HEK293 (cell line): ENCODE measurements at regions of chr4 and their contacts with region 1.

Region 1: GRCh38 chr4:138870737-138871554 is 144.6 kb upstream of the NOCT start:
- H3K4me3 ChIP-seq: no peak overlapping the region
- H3K27ac ChIP-seq: no peak overlapping the region
- H3K4me1 ChIP-seq: no peaks in the 10 kb centered on the region
- CTCF ChIP-seq: no peak

Region 2: GRCh38 chr4:137819964-137820383 is 1051.0 kb before region 1 on chr4:
- CTCF ChIA-PET with region 1: interaction called, 12 read pairs
- POLR2A ChIA-PET with region 1: no interaction called
- H3K4me3 ChIP-seq: no peak overlapping the region
- H3K27ac ChIP-seq: no peak overlapping the region
- H3K4me1 ChIP-seq: no peaks in the 10 kb centered on the region
- CTCF ChIP-seq: 0 out of 2 replicates have a peak, but pooled peaks have one; percentile 21

Region 3: GRCh38 chr4:138919094-138919936 is 48.4 kb after region 1 on chr4:
- CTCF ChIA-PET with region 1: interaction called, 11 read pairs
- POLR2A ChIA-PET with region 1: no interaction called
- H3K4me3 ChIP-seq: no peak overlapping the region
- H3K27ac ChIP-seq: no peak overlapping the region
- H3K4me1 ChIP-seq: no peaks in the 10 kb centered on the region
- CTCF ChIP-seq: peak; percentile 50; the same call in 1 of the 2 replicates